ENCODE measurements at regions of chr18 and their contacts with region 1.

Region 1: GRCh38 chr18:58493516-58494253 is 135.2 kb downstream of the ALPK2 start:
- DNase-seq: peak; percentile 76
- ATAC-seq: peak; percentile 89
- H3K4me3 ChIP-seq: no peak overlapping the region
- H3K27ac ChIP-seq: peak overlapping the region; percentile 63
- H3K4me1 ChIP-seq: peaks cover 98% of the 10 kb centered on the region
- H3K27me3 ChIP-seq: no peaks in the 10 kb centered on the region
- CTCF ChIP-seq: peak; percentile 91
- EP300 ChIP-seq: peak in 1 of 2 experiments; percentile 47; a peak in 1 of 4 replicates
- POLR2A ChIP-seq: no peak
- RAD21 ChIP-seq: peak; percentile 94

Region 2: GRCh38 chr18:58024139-58024538 is 469.5 kb before region 1 on chr18:
- CTCF ChIA-PET with region 1: no interaction called
- POLR2A ChIA-PET with region 1: no interaction called
- in situ Hi-C with region 1: loop called (anchors 10 kb)
- intact Hi-C with region 1: no loop called
- DNase-seq: peak; percentile 94
- ATAC-seq: peak; percentile 93
- H3K4me3 ChIP-seq: no peak overlapping the region
- H3K27ac ChIP-seq: peak overlapping the region; percentile 61
- H3K4me1 ChIP-seq: peaks cover 96% of the 10 kb centered on the region
- H3K27me3 ChIP-seq: no peaks in the 10 kb centered on the region
- CTCF ChIP-seq: no peak
- EP300 ChIP-seq: peak in 1 of 2 experiments; percentile 71; a peak in 1 of 4 replicates
- POLR2A ChIP-seq: no peak
- RAD21 ChIP-seq: no peak

Region 3: DNA sequence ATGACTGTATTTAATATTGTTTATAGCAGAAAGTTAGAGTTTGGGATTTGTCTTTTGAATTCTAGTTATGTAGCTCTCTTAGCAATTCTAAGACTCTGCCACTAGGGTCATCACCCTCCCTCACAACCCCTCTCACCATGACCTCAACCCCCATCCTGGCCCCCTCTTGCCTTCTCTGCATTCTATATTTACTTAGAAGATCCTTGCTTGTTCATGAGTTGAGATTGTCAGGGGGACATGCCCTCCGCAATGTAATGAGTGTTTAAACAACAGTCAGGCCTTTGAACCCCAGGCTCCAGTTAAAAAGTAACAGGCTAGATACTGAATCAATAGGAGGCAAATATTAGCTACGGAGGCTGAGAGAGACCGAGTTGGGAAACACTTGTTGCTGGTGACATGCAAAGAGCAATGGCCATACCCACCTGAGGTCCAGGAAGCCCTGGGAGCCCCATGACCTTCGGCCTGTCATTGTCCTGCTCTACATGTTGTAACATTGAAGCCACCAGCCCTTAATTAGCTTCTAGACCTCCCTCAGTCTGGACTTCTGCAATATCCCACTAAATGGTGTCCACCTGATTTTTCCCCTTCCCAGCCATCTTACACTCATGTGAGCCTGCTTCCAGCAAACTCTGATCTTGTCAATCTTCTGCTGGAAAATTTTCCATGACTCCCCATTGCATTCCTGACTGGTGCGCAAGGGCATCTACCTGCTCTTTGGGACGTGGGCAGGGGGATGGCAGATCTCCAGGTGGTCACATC is 85.9 kb before region 1 on chr18:
- CTCF ChIA-PET with region 1: interaction called, 12 read pairs
- POLR2A ChIA-PET with region 1: interaction called, 24 read pairs
- in situ Hi-C with region 1: loop called (anchors 5 kb)
- intact Hi-C with region 1: loop called (anchors 2 kb)
- DNase-seq: peak; percentile 100
- ATAC-seq: peak; percentile 74
- H3K4me3 ChIP-seq: peak overlapping the region in 1 of 3 experiments; percentile 47; a peak in 1 of 6 replicates
- H3K27ac ChIP-seq: peak overlapping the region; percentile 98
- H3K4me1 ChIP-seq: peaks cover 99% of the 10 kb centered on the region
- H3K27me3 ChIP-seq: no peaks in the 10 kb centered on the region
- CTCF ChIP-seq: peak; percentile 59
- EP300 ChIP-seq: peak; percentile 95 to 100
- POLR2A ChIP-seq: peak in 1 of 2 experiments; percentile 51; a peak in 1 of 4 replicates
- RAD21 ChIP-seq: peak; percentile 66

Region 4: GRCh38 chr18:58556331-58557007 is 62.8 kb after region 1 on chr18:
- CTCF ChIA-PET with region 1: no interaction called
- POLR2A ChIA-PET with region 1: no interaction called
- in situ Hi-C with region 1: no loop called
- intact Hi-C with region 1: no loop called
- DNase-seq: no peak
- ATAC-seq: no peak
- H3K4me3 ChIP-seq: no peak overlapping the region
- H3K27ac ChIP-seq: no peak overlapping the region
- H3K4me1 ChIP-seq: peaks cover 18% of the 10 kb centered on the region
- H3K27me3 ChIP-seq: no peaks in the 10 kb centered on the region
- CTCF ChIP-seq: no peak
- EP300 ChIP-seq: no peak
- POLR2A ChIP-seq: no peak
- RAD21 ChIP-seq: no peak

Region 5: DNA sequence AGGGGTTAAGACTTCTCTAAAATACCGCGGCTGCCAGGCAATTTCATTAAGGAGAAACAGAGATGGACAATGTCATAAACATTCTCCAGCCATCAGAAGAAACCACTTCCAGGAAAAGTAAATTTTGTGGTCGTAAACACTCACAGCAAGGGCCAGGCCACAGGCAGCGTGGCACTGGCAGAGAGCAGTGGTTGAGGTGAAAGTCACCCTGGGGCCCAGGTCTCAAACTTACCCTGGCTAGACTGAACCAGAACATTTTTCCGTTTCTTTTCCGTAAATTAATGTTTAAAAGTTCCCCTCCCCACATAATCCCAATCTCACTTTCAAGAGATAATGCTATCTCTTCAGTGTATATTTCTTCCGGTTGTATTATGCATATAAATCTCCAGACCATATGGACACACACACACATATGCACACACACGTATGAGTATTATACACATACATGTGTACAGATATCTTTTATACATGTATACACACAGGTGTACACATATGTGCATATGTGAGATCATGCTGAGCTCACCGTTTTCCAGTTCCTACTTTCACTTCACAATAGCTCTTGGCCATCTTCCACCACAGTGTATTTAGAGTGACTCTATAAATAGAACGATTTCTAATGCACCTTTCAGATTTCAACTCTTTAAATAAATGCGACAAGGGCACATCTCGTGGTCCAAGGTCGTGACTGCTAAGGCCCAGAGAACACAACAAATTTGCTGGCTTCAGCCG is 267.7 kb after region 1 on chr18:
- CTCF ChIA-PET with region 1: interaction called, 3 read pairs
- POLR2A ChIA-PET with region 1: no interaction called
- in situ Hi-C with region 1: loop called (anchors 5 kb)
- intact Hi-C with region 1: loop called (anchors 10 kb)
- DNase-seq: no peak
- ATAC-seq: no peak
- H3K4me3 ChIP-seq: no peak overlapping the region
- H3K27ac ChIP-seq: no peak overlapping the region
- H3K4me1 ChIP-seq: peaks cover 45% of the 10 kb centered on the region
- H3K27me3 ChIP-seq: no peaks in the 10 kb centered on the region; a peak in 1 of 5 replicates
- CTCF ChIP-seq: no peak
- EP300 ChIP-seq: no peak
- POLR2A ChIP-seq: no peak
- RAD21 ChIP-seq: no peak

Region 6: DNA sequence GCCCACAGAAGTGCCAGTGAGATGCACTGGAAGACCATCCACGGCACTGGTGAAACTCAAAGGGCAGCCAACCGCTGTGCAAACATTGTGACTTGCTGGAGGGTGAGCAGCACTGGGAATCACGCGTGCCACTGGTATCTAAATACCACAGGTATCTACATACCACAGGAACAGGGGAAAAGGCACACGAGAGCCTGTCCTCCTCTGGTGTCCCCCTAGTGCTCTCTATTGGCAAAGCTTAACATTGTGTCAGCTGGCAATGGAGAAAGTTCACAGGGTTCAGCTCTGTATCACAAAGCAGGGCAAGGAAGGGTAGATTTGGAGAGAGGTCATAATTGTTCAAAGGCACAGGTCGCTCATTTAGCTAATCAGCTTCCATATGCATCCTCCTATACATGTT is 633.4 kb after region 1 on chr18:
- CTCF ChIA-PET with region 1: no interaction called
- POLR2A ChIA-PET with region 1: no interaction called
- in situ Hi-C with region 1: no loop called
- intact Hi-C with region 1: no loop called
- DNase-seq: no peak
- ATAC-seq: peak; percentile 88
- H3K4me3 ChIP-seq: no peak overlapping the region
- H3K27ac ChIP-seq: no peak overlapping the region
- H3K4me1 ChIP-seq: no peaks in the 10 kb centered on the region
- H3K27me3 ChIP-seq: peaks cover 0 to 8% of the 10 kb centered on the region in 2 experiments; a peak in 1 of 5 replicates
- CTCF ChIP-seq: 0 out of 2 replicates have a peak, but pooled peaks have one; percentile 15
- EP300 ChIP-seq: no peak
- POLR2A ChIP-seq: no peak
- RAD21 ChIP-seq: no peak